ENCODE measurements at regions of chr15 and their contacts with region 1.

Region 1: GRCh38 chr15:98562331-98562937 is 85.9 kb upstream of the IGF1R start:
- DNase-seq: no peak
- ATAC-seq: no peak
- H3K4me3 ChIP-seq: no peak overlapping the region
- H3K27ac ChIP-seq: no peak overlapping the region
- H3K4me1 ChIP-seq: no peaks in the 10 kb centered on the region
- H3K27me3 ChIP-seq: peaks cover 0 to 46% (median 26%) of the 10 kb centered on the region in 7 donors
- CTCF ChIP-seq: no peak

Region 2: DNA sequence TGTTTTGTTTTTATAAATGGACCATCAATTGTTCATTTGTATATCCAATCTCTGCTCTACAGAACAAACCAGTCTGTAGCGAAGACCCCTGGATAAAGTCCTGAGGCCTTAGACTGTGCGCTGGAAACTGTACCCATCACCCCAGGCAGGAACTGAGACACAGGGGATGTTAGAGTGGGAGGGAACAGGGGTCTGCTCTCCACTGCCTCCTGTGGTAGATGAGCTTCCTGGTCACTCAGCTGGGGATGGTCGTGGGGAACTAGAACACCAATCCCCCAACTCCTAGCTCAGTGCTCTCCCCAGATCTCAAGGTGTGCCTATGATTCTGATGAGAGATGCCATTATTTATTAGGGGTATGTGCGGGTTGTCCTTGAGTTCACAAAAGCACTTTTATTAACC is 254.3 kb before region 1 on chr15:
- intact Hi-C with region 1: no loop called
- DNase-seq: no peak
- ATAC-seq: no peak
- H3K4me3 ChIP-seq: no peak overlapping the region
- H3K27ac ChIP-seq: no peak overlapping the region
- H3K4me1 ChIP-seq: peaks cover 0 to 3% (median 0%) of the 10 kb centered on the region in 9 donors
- H3K27me3 ChIP-seq: peaks cover 0 to 35% (median 13%) of the 10 kb centered on the region in 7 donors
- CTCF ChIP-seq: no peak

Region 3: GRCh38 chr15:98599909-98600691 is 37.7 kb after region 1 on chr15:
- intact Hi-C with region 1: loop called in 1 of 10 experiments (anchors 5 kb)
- DNase-seq: peak; percentile 15 to 35
- ATAC-seq: peak in 7 of 8 donors; percentile 39 to 74 (median 62)
- H3K4me3 ChIP-seq: peak overlapping the region in 9 of 10 donors; percentile 16 to 54 (median 45)
- H3K27ac ChIP-seq: peak overlapping the region in 2 of 10 donors; percentile 34 to 78
- H3K4me1 ChIP-seq: peaks cover 0 to 12% (median 0%) of the 10 kb centered on the region in 9 donors
- H3K27me3 ChIP-seq: peaks cover 0 to 44% (median 28%) of the 10 kb centered on the region in 7 donors
- CTCF ChIP-seq: no peak